ENCODE measurements at regions of chr3 and their contacts with region 1.

Region 1: DNA sequence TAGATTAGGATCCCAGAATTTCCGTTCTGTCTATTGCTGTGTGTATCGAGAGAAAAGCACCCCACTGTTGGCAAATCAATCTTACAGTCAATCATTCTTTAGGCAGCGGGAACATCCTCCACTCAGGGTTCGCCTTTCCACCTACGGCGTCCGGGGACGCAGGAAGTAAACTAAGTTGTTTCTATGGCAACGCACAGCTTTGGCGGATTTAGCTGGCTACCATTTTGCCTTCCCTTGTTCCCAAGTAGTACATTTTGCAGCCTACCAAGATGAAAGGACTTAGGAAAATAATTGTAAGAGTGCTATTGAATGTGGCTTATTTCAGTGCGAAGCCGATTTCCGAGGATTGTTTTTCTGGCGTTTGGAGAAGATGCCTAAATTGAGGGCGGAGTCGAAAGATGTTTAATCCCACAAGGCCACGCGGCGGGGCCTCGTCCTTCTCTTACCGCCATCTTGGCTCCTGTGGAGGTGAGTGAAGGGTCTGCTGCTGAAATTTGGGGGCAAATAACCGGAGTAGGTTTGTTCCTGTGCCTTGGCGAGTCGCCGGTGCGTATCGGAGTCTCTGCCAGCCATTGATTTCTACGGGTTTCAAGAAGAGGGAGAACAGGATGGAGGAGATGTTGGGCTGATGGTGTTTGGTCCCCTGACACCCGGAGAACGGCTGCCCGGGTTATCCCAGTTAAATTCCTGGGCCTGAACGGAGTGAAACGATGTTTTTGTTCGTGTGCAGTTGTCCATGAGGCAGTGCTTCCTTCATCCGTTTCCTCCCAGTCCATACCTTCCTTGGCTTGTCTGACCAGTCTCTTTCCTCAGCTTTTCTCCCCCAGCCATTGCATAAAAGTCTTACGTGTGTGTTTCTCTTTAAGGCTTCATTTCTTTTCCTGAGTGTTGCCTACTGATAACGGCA is at the start of gene RPL35A:
- H3K4me3 Mint-ChIP-seq: peak within 1 kb of the TSS; percentile 99
- H3K27ac Mint-ChIP-seq: peak within 1 kb of the TSS; percentile 94
- H3K4me1 Mint-ChIP-seq: peaks cover 40% of the 10 kb centered on the region
- H3K27me3 Mint-ChIP-seq: peaks cover 1% of the 10 kb centered on the region

Region 2: DNA sequence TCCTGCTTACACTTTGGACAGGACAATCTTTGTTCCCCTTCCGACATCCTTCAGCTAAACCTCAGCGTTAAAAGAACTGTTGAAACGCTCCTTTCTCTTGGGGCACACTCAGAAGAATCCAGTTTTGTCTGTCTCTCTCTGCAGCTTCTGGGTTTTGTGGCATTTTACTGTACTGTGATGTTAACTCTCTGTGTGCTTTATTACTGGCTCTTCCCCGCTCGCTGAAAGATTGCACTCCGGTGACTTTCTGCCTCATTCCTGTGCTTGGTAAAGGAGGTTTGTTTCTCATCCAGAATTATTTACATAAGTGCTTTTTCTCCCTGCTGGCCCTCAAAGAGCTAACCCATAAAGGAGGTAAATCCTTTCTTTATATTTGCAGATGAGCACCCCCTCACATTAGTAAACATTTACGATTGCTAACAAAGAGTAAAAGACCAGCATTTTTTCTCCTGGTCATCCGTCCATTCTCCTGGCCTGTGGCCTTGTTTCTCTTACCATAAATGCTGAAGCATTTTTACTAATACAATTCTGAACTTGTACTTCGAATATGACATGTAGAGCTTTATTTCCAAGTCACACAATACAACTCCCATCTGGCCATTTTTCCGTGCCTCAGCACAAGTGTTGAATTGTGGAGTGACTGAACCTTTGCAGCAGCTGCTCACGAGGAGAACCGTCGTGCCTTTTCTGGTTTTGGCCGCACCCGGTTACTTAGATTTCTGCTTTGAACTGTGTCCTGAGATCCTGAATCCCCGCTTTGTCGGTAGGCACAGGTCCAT is 69.3 kb before region 1 on chr3:
- intact Hi-C with region 1: loop called (anchors 10 kb)
- H3K4me3 Mint-ChIP-seq: no peak overlapping the region
- H3K27ac Mint-ChIP-seq: peak overlapping the region; percentile 85
- H3K4me1 Mint-ChIP-seq: peaks cover 49% of the 10 kb centered on the region
- H3K27me3 Mint-ChIP-seq: no peaks in the 10 kb centered on the region

Region 3: GRCh38 chr3:197936819-197937384 is 13.1 kb before region 1 on chr3:
- intact Hi-C with region 1: no loop called
- H3K4me3 Mint-ChIP-seq: no peak overlapping the region
- H3K27ac Mint-ChIP-seq: no peak overlapping the region
- H3K4me1 Mint-ChIP-seq: no peaks in the 10 kb centered on the region
- H3K27me3 Mint-ChIP-seq: no peaks in the 10 kb centered on the region

Region 4: DNA sequence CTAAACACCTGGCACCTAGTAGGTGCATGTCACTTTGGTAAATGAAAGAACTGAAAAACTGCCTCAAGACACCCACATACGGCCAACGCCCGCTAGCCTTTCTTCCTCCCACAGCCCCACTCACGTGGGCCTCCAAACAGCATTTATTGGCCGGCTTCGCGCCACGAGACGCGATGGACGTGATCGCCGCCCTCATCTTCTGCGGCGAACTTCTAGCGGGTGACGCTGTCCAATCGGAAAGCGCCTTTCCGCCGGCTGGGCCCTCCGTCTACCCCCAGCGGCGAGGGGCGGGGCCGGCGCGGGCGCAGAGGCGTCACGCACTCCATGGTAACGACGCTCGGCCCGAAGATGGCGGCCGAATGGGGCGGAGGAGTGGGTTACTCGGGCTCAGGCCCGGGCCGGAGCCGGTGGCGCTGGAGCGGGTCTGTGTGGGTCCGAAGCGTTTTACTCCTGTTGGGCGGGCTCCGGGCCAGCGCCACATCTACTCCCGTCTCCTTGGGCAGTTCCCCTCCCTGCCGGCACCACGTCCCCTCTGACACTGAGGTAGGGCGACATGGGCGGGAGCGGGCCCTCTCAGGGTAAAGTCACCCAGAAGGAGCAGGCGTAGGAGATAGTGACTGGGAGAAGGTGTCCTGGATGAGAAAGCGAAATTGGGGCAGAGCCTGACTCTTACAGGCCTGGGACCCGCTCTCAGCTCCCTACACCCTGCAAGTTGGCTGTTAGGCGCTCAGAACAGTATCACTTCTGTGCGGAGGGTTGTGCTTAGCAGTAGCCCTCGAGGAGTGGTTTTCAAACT is 10.1 kb after region 1 on chr3 and contains the start of gene LMLN:
- intact Hi-C with region 1: loop called (anchors 1 kb)
- H3K4me3 Mint-ChIP-seq: peak within 1 kb of the TSS; percentile 98
- H3K27ac Mint-ChIP-seq: peak within 1 kb of the TSS; percentile 92
- H3K4me1 Mint-ChIP-seq: peaks cover 71% of the 10 kb centered on the region
- H3K27me3 Mint-ChIP-seq: no peaks in the 10 kb centered on the region

Measured in dendritic cell treated with granulocyte-macrophage colony-stimulating factor and Interleukin-4, amounts not matched to agents 40 ng/mL and 50 ng/mL, for 4 days (primary cell).